ENCODE measurements at regions of chr18 and their contacts with region 1.

Region 1: DNA sequence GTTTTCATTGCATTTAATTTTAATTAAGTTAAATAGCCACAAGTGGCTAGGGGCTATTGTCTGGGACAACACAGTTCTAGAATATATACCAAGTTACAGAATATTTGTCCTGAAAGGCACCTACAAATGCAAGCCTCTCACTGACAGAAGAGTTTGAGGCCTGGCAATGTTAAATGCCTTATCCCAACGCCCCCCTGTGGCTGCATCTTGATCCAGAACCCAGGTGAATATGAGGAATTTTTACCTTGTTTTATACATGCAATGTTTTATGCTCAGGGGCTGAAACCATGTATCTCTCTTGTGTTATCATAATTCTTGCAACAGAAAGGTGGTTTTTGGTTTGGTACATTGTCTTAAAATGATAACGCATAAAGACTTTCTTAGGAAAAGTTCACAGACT is 71.8 kb upstream of the SEC11C start:
- DNase-seq: no peak
- ATAC-seq: no peak
- H3K4me3 ChIP-seq: no peak overlapping the region
- H3K27ac ChIP-seq: no peak overlapping the region
- H3K4me1 ChIP-seq: no peaks in the 10 kb centered on the region
- H3K27me3 ChIP-seq: no peaks in the 10 kb centered on the region
- CTCF ChIP-seq: no peak

Region 2: DNA sequence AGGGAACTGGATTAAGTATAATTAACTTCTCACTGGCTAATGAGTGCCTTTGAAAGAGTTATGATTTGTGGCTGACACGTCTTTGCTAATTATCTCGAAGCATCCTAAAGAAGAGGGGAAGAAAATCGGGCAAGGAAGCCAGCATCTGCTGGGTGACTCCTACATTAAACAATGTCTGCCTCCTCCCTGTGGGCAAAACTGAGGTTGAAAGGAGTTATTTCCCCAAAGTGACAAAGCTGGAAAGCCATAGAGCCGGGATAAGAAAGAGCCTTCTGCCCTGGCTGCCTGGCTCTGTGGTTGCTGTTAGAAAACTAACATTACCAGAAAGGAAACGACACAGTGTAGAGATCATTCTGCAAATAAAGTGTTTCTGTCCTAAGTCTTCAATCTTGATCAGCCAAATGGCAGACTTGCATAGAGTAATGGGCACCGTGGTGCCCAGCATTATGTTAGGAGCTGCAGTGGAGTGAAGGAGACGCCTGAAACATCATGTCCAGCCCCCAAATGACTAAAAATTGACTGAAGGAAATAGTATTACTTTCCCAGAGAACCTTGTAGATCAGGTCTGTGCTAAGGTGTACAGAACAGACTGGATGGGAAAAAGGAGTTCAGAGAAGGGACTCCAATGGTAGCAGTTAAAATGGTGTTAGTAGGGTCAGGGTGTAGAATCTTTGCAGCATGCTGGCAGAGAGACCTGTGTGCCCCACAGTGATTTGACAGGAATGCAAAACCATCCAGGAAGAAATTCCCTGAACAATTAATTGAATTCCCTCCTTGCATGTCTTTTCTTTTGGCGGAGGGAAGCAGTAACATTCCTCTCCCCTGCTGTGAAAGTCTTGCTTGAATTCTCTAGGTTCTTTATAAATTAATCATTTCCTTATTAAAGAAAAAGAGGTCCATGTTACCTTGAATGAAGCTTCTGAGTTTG is 483.4 kb before region 1 on chr18:
- intact Hi-C with region 1: no loop called
- DNase-seq: no peak
- ATAC-seq: no peak
- H3K4me3 ChIP-seq: no peak overlapping the region
- H3K27ac ChIP-seq: no peak overlapping the region
- H3K4me1 ChIP-seq: no peaks in the 10 kb centered on the region
- H3K27me3 ChIP-seq: peaks cover 0 to 7% of the 10 kb centered on the region in 2 donors
- CTCF ChIP-seq: no peak

Region 3: DNA sequence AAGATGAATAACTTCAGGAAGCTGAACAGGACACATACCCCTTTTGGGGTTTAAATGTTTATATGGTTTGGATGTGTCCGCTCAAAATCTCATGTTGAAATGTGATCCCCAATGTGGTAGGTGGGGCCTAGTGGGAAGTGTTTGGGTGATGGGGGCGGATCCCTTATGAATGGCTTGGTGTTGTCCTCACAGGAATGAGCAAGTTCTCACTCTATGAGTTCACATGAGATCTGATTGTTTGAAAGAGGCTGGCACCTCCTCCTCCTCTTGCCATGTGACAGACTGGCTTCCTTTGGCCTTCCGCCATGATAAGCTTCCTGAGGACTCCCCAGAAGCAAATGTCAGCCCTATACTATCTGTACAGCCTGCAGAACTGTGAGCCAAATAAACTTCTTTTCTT is 291.8 kb before region 1 on chr18:
- intact Hi-C with region 1: loop called in 1 of 2 experiments (anchors 10 kb)
- DNase-seq: no peak
- ATAC-seq: no peak
- H3K4me3 ChIP-seq: no peak overlapping the region
- H3K27ac ChIP-seq: no peak overlapping the region
- H3K4me1 ChIP-seq: no peaks in the 10 kb centered on the region
- H3K27me3 ChIP-seq: no peaks in the 10 kb centered on the region
- CTCF ChIP-seq: no peak

Region 4: DNA sequence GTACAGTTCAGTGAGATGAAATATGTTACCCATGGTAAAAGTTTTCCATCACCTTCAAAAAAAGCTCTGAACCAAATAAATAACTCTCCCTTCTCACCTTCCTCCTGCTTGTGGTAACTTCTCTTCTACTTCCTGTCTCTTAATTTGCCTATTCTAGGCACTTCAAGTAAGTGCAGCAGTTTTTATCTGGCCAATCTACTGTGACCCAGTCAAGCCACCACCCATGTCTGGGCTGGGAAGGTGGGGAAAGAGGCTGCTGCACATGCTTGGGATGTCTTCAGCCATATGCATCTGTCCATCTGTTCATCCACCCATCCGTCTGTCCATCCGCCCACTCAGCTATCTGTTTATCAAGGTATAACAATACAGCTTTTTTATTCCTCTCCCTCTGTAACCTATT is 171.6 kb before region 1 on chr18:
- intact Hi-C with region 1: no loop called
- DNase-seq: no peak
- ATAC-seq: no peak
- H3K4me3 ChIP-seq: no peak overlapping the region
- H3K27ac ChIP-seq: no peak overlapping the region
- H3K4me1 ChIP-seq: peaks cover 0 to 14% of the 10 kb centered on the region in 2 donors
- H3K27me3 ChIP-seq: no peaks in the 10 kb centered on the region
- CTCF ChIP-seq: no peak